ENCODE measurements at regions of chr11 and their contacts with region 1.

Region 1: DNA sequence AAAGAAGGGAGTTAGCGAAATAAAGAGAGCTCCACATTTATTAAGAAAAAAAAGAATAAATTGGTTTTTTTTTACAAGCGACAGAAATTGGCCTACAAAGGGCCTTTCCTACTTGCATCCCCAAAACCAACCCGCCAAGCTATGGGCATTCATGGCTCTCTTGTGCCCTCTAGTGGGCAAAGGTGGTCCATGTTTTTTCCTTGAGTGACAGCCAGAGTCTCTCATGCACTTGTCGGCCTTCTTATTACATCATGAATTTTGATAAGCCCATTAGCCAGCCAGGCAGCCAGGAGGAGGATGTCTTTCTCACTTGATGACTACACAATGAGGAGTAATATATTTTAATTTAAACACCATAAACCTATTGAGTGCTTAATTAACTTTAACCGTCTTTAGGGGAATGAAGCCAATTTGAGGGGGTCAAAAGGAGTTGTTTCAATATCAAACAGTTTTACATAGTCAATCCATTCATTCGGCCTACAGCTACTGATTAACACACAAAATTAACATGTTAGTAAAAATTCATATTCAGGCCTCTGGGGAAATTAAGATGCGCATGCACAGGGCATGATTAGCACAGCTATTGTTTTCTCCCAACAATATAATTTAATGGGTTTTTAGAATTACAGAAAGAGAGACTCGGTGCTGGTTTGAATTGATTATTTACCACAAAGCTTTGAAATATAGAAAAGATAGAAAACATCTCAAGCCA is 85.5 kb downstream of the RCN1 start:
- DNase-seq: no peak
- ATAC-seq: peak; percentile 68

Region 2: DNA sequence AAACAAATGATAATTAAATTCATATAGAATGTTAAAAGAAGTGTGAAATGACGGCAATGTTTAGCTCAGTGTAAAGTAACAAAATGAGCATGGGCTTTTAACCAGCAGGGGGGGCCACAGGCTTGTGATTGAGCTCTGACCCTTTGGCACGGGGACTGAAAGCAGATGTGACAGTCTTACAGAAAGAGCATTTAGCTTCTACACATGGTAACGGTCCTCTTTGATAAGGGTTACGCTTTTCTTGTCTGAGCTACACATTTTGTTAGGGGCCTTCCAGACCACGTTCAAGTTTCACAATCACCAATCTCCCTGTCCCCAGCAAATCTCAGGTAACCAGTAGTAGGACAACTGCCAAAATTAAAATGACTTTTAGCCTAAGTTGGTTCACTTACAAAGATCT is 1069.3 kb before region 1 on chr11:
- intact Hi-C with region 1: loop called (anchors 2 kb)
- DNase-seq: peak; percentile 64
- ATAC-seq: no peak

Region 3: DNA sequence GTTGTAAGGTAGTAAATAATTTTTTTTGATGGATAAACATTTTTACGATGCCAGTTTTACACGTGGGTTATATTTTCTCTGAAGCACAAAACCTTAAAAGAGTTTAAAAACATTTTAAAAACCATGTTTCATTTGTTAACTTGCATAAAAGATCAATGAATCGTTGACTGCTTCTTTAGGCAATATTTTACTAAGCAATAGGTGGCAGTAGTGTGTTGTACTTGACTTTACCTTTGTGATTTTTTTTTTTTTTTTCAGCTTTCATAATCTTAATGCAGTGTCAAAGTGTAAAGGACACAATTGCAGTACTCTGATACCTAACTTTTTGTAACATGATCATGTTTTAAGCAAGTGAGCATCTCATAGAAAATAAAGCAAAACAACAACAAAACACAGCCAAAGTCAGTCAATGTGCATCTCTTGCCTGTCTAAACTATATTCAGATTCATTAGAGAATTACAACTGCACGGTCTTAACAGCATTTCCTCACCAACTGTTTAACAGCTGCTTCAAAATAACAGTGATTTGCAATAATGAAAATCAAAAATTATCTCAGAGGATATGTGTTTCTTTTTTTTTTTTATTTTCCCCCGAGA is 779.0 kb before region 1 on chr11:
- intact Hi-C with region 1: loop called (anchors 5 kb)
- DNase-seq: no peak
- ATAC-seq: no peak

Region 4: GRCh38 chr11:32052218-32052617 is 124.2 kb before region 1 on chr11:
- intact Hi-C with region 1: loop called (anchors 1 kb)
- DNase-seq: no peak
- ATAC-seq: no peak

Region 5: DNA sequence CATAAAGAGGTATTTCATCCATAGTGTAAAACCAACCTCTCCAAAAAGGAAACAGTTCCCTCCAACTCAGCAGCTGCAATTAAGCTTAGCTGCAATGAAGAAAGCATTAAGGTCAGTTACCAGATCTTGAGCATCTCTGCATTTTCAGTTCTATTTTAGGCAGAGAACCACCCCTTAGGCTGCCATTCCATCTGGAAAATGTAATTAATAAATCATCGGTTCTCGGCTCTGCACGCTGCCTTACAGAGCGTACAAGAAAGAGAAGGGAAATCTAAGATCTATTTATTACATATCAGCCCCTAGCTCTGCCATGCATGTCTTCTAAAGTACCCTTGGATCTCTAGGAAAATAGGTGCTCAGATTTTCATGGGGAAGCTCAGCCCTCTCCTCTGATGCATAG is 14.0 kb before region 1 on chr11:
- intact Hi-C with region 1: no loop called
- DNase-seq: no peak
- ATAC-seq: no peak

Measured in Right ventricle myocardium inferior (tissue), 1 donor.